ENCODE measurements at regions of chr18 and their contacts with region 1.

Region 1: DNA sequence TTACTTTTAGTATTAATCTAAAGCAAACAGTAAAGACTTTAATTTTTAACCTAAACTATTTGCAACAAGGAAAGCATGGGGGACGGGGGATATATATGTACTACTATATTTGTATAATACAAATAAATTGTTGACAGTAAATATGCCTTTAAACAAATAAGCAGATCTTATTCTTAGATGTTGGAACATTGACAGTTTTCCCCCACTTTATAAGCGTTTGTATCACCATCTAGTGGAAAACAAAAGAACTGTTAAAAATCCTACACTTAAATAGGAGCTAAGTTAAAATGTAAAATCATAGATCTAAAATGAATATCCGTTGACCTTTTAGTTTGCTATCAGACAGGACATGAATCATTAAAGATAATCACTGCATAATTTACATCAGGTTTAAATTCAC is 50.0 kb downstream of the RBBP8 start:
- DNase-seq: no peak
- ATAC-seq: no peak
- H3K4me3 Mint-ChIP-seq: no peak overlapping the region
- H3K27ac Mint-ChIP-seq: no peak overlapping the region
- H3K4me1 Mint-ChIP-seq: peaks cover 5% of the 10 kb centered on the region
- H3K27me3 Mint-ChIP-seq: no peaks in the 10 kb centered on the region
- CTCF ChIP-seq: peak; percentile 67

Region 2: DNA sequence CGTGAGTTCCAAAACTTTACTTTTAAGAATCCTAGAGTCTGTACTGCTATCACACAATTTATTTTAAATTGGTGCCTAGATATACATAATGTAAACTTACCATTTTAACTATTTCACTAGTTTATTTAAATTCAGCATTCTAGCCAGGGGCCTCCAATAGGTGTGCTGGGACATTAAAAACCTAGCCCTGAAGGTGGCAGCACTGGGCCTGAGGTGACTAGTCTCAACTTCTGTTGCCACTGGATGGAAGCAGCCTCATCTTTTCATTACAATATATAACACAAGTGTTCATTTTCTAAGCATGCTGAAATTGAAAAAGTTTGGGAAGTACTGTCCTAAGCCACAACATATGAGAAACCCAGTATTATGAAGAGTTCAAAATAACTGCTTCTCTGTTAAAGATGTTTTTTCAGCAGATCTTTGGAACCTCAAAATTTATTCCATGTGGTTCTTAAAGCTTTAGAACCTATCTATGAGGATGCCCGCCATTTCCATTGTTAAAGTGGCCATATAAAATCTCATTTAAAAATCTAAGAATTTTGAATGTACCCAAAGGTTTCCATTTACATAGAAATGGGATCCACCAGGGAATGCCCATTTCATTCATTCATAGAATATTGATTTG is 53.0 kb before region 1 on chr18:
- CTCF ChIA-PET with region 1: interaction called, 19 read pairs
- POLR2A ChIA-PET with region 1: no interaction called
- intact Hi-C with region 1: no loop called
- DNase-seq: peak; percentile 93
- ATAC-seq: peak; percentile 59
- H3K4me3 Mint-ChIP-seq: no peak overlapping the region
- H3K27ac Mint-ChIP-seq: no peak overlapping the region
- H3K4me1 Mint-ChIP-seq: peaks cover 12% of the 10 kb centered on the region
- H3K27me3 Mint-ChIP-seq: peaks cover 7% of the 10 kb centered on the region
- CTCF ChIP-seq: peak; percentile 76

Region 3: DNA sequence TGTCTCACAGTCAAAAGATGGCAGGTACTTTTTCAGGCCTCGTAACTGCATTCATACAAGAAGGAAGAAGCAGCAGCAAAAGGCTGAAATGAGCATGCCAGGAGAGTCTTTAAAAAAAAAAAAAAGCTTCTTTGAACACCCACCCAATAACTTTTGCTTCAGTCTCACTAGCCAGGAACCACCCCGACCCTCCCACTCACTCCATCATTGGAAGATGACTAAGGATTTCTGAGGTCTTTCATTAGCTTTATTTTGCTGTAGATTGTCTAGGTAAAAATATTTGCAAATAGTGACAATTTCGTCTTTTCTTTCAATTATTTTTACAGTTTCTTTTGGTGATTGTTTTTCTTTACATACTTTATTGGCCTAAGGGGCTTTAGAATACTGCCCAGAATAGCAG is 12.1 kb before region 1 on chr18:
- CTCF ChIA-PET with region 1: interaction called, 13 read pairs
- POLR2A ChIA-PET with region 1: no interaction called
- intact Hi-C with region 1: no loop called
- DNase-seq: no peak
- ATAC-seq: no peak
- H3K4me3 Mint-ChIP-seq: no peak overlapping the region
- H3K27ac Mint-ChIP-seq: no peak overlapping the region
- H3K4me1 Mint-ChIP-seq: peaks cover 8% of the 10 kb centered on the region
- H3K27me3 Mint-ChIP-seq: no peaks in the 10 kb centered on the region
- CTCF ChIP-seq: no peak

Measured in activated CD8-positive, alpha-beta T cell treated with anti-CD3 and anti-CD28 coated beads for 36 hours (primary cell).